PC-3 (cell line): ENCODE measurements at regions of chr11 and their contacts with region 1.

Region 1: GRCh38 chr11:133927690-133928627 is 28.8 kb downstream of the IGSF9B start:
- DNase-seq: peak; percentile 82
- ATAC-seq: peak; percentile 84
- H3K4me3 ChIP-seq: peak overlapping the region; percentile 57
- H3K27ac ChIP-seq: no peak overlapping the region
- H3K4me1 ChIP-seq: peaks cover 10% of the 10 kb centered on the region
- H3K27me3 ChIP-seq: no peaks in the 10 kb centered on the region
- CTCF ChIP-seq: peak; percentile 89

Region 2: DNA sequence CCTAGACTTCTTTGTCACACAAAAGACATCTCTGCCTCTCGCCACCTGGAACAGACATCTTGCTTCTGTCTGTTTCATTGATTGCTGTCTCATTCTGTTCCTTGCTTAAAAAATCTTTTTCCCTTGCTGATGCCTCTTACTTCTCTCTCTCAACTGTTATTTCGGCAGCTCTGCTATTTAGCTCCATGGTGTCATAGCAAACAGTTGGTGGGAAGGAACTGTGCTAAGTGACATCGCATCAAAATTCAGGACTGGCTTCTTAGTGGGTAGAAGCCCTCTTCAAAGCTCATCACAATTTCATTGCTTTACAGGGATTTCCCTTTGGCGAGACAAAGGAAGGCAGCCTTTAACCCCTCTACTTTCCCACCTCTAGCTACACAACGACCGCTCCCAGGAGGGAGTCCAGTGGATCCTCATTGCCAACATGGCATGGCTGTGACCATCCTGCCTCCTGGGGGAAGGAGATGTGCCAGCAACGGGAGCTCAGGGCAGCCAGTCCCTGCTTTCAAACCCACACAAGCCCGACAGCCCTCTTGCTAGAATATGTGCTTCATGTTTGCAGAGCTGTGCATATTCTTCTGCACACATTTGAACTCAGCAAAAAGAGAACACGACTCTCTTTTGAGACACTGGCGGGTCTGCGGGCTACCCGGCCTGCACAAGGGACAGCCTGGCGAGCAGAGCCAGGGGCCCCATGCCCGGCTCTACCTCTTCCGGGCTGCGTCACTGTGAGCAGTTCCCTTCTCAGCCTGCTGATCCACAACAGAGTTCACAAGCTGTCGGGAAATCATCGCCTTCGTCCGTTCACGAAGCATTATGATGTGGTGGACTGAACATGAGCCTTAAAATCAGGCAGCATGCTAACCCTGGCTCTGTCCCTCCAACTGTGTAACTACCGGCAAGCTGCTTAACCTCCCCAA is 89.8 kb after region 1 on chr11:
- CTCF ChIA-PET with region 1: interaction called, 11 read pairs
- POLR2A ChIA-PET with region 1: no interaction called
- intact Hi-C with region 1: no loop called
- DNase-seq: no peak
- ATAC-seq: no peak
- H3K4me3 ChIP-seq: no peak overlapping the region
- H3K27ac ChIP-seq: no peak overlapping the region
- H3K4me1 ChIP-seq: no peaks in the 10 kb centered on the region
- H3K27me3 ChIP-seq: peaks cover 69% of the 10 kb centered on the region
- CTCF ChIP-seq: no peak

Region 3: GRCh38 chr11:134050541-134051383 is 122.8 kb after region 1 on chr11:
- CTCF ChIA-PET with region 1: interaction called, 6 read pairs
- POLR2A ChIA-PET with region 1: no interaction called
- intact Hi-C with region 1: loop called (anchors 10 kb)
- DNase-seq: peak; percentile 72
- ATAC-seq: peak; percentile 86
- H3K4me3 ChIP-seq: no peak overlapping the region
- H3K27ac ChIP-seq: no peak overlapping the region
- H3K4me1 ChIP-seq: peaks cover 11% of the 10 kb centered on the region
- H3K27me3 ChIP-seq: peaks cover 22% of the 10 kb centered on the region; the same call in 1 of the 2 replicates
- CTCF ChIP-seq: peak; percentile 94

Region 4: DNA sequence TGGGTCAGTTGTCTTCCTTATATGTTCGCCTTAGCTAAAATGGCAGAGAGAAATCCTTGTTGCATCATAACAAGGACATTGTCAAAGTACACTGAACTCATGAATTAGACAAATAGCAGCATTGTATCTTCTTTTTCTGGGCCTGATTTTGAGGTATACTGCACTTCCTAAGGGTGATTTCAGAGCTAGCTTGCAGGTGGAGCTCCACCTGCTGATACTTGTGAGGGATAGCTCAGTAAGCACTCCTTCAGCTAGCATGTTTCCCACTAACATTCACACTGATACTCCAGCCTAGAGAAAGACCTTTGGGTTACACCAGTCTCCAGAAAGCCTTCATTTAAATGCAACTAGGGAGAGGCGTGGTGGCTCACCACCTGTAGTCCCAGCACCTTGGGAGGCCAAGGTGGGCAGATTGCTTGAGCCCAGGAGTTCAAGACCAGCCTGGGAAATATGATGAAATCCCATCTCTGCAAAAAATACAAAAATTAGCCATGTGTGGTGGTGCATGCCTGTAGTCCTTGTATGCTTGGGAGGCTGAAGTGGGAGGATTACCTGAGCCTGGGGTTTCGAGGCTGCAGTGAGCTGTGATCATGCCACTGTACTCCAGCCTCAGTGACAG is 170.7 kb after region 1 on chr11:
- CTCF ChIA-PET with region 1: interaction called, 18 read pairs
- POLR2A ChIA-PET with region 1: no interaction called
- intact Hi-C with region 1: loop called (anchors 1 kb)
- DNase-seq: peak; percentile 53
- ATAC-seq: peak; percentile 93
- H3K4me3 ChIP-seq: no peak overlapping the region
- H3K27ac ChIP-seq: no peak overlapping the region
- H3K4me1 ChIP-seq: no peaks in the 10 kb centered on the region
- H3K27me3 ChIP-seq: peaks cover 30% of the 10 kb centered on the region
- CTCF ChIP-seq: peak; percentile 66

Region 5: GRCh38 chr11:134139873-134140331 is 211.9 kb after region 1 on chr11:
- CTCF ChIA-PET with region 1: no interaction called
- POLR2A ChIA-PET with region 1: no interaction called
- intact Hi-C with region 1: loop called (anchors 1 kb)
- DNase-seq: peak; percentile 86
- ATAC-seq: peak; percentile 83
- H3K4me3 ChIP-seq: no peak overlapping the region
- H3K27ac ChIP-seq: no peak overlapping the region
- H3K4me1 ChIP-seq: no peaks in the 10 kb centered on the region
- H3K27me3 ChIP-seq: peaks cover 52% of the 10 kb centered on the region
- CTCF ChIP-seq: peak; percentile 91